Posterior vena cava (tissue), 2 donors: ENCODE measurements at regions of chr5 and their contacts with region 1.

Region 1: DNA sequence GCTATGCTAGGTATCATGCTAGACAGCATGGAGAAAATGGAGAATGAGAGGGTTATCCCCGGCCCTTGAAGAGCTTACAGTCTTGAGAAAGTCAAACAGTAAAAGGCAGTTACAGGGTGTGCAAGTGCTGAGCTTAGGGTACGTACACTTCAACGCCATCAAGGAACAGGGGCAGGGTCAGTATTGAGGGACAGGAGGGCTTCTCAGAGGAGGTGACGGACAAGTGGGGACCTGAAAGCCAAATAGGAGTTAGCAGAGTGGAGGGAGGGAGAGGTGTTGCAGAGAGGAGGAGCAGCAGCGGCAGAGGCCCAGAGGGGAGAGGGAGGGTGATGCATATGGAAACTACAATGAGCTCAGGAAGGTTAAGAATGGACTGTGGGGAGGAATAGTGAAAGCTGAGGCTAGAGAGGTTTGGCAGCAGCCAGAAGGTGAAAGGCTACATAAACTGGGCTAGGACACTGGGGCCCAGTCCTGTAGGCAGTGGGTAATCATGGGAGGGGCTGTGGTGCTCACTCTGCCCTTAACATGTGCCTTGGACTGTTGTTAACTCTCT is 88.0 kb downstream of the NRG2 start:
- DNase-seq: no peak

Region 2: GRCh38 chr5:139863855-139864558 is 91.1 kb before region 1 on chr5:
- intact Hi-C with region 1: loop called in 1 of 2 experiments (anchors 10 kb)
- DNase-seq: peak; percentile 87

Region 3: GRCh38 chr5:139884144-139884543 is 71.0 kb before region 1 on chr5:
- intact Hi-C with region 1: no loop called
- DNase-seq: no peak

Region 4: GRCh38 chr5:140005145-140005591 is 50.0 kb after region 1 on chr5:
- intact Hi-C with region 1: no loop called
- DNase-seq: no peak